GM10248 (cell line): ENCODE measurements at regions of chr1 and their contacts with region 1.

Region 1: DNA sequence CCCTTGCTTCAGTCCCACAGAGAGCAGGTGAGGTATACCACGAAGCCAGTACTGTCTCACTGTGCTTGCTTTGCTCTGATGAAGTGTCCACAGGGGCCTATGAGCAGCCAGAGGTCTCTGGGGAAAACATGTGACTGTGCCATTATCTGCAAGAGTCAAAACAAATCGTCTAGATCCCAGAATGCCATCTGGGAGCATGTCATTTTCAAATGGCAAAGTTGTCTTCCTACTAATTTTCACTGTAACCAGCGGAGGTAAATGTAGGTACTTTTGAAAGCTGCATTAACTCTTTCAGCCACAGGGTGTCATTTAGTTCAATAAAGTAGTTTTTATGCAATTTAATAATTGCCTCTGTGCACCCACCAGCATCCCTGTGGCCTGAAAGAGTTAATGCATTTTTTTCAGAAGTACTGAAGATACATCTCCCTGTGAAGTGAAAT is 173.6 kb upstream of the SGIP1 start:
- DNase-seq: no peak
- CTCF ChIP-seq: peak; percentile 36

Region 2: DNA sequence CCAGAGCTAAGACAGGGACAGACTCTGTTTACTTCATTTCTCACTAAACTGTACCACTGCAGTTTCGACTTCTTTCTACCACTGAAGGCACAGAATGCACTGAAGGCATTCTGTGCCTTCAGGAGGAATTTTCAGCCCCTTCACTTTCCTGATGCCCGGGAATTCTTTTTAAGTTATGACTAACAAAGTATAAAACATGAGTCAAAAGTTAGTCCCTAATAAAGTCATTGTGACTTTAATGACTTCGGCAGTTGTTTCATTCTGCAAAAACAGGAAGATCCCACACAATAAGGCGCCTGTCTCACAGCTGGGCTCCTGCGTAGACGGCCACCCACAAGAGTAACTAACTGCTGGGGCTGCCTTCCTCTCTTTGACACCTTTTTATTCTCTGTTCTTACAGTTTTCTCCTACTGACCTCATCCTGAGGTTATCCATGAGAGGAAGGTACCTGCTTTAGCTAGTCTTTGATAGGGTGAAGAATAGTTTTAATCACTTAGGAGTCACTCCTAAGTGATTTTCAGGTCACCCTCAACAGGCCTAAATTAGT is 10.2 kb before region 1 on chr1:
- CTCF ChIA-PET with region 1: interaction called, 40 read pairs
- POLR2A ChIA-PET with region 1: interaction called, 3 read pairs
- DNase-seq: no peak
- CTCF ChIP-seq: no peak